Right cardiac atrium (tissue), 5 donors: ENCODE measurements at regions of chr5 and their contacts with region 1.

Region 1: DNA sequence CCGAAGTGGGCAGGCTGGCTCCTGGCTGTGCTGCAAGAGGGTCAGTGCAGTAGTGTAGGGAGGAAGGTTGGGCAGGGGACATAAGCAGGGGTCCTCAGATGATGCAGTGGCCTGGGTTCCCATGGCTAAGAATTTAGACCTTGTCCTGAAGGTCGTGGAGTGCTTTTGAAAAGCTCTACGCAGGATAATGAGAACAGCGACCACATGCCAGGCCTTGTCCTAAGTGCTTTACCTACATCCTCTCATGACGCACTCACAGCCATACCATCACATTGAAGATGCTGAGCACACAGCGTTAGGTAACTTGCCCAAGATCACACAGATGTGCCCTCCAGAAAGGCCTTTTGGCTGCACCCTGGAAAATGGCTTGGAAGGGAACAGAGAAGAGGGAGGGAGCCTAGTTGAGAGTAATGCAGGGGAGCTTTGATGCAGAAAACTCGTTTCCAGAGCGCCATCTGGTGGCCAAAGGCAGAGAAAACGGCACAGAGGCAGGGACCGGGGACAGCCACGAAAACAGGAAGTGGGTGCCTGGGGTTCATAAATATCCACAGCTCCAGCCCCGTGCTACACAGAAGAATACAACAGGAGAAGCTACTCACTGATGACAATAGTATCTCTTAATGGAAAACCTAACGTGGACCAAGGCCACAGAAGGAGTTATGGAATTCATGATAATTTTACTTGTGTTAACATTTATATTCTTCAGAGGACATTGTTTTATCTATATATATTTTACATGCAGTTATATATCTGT is 2.6 kb upstream of the PCDH12 start:
- DNase-seq: peak; percentile 88 to 94 (median 94)
- ATAC-seq: peak; percentile 74 to 86
- H3K4me3 ChIP-seq: no peak overlapping the region
- H3K27ac ChIP-seq: peak overlapping the region; percentile 24
- H3K4me1 ChIP-seq: peaks cover 5% of the 10 kb centered on the region
- H3K27me3 ChIP-seq: no peaks in the 10 kb centered on the region

Region 2: GRCh38 chr5:141691867-141692532 is 268.6 kb before region 1 on chr5:
- intact Hi-C with region 1: loop called (anchors 2 to 5 kb)
- DNase-seq: peak; percentile 83 to 94 (median 94)
- ATAC-seq: peak; percentile 86 to 91
- H3K4me3 ChIP-seq: peak overlapping the region; percentile 37
- H3K27ac ChIP-seq: no peak overlapping the region
- H3K4me1 ChIP-seq: no peaks in the 10 kb centered on the region
- H3K27me3 ChIP-seq: no peaks in the 10 kb centered on the region

Region 3: DNA sequence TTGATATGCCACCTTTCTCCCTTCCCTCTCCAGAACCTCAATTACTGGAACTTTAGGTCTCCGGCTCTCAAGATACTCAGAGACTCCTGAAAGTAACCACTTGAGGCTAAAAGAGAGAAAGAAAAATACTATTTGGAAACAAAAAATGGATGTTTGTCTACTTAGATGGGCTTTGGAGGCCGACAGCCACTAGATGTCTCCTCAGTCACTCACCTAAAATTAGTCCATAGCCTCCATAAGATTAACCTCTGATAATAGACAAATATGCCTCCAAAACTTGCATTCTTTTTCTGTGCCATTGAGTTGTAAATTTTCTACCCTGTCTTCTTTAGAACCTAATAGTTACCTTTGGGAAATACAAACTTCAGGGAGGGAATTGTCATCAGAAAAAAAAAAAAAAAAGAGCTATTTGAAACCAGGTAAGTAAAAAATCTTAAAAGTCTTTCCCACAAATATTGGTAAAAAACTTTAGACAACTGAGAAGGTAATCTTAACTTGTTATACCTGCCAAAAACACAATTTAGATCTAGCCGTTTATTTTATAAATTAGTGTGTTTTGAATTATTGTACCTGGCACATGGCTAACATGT is 71.2 kb before region 1 on chr5:
- intact Hi-C with region 1: loop called in 2 of 4 experiments (anchors 5 to 10 kb)
- DNase-seq: no peak
- ATAC-seq: no peak
- H3K4me3 ChIP-seq: no peak overlapping the region
- H3K27ac ChIP-seq: no peak overlapping the region
- H3K4me1 ChIP-seq: no peaks in the 10 kb centered on the region
- H3K27me3 ChIP-seq: no peaks in the 10 kb centered on the region

Region 4: DNA sequence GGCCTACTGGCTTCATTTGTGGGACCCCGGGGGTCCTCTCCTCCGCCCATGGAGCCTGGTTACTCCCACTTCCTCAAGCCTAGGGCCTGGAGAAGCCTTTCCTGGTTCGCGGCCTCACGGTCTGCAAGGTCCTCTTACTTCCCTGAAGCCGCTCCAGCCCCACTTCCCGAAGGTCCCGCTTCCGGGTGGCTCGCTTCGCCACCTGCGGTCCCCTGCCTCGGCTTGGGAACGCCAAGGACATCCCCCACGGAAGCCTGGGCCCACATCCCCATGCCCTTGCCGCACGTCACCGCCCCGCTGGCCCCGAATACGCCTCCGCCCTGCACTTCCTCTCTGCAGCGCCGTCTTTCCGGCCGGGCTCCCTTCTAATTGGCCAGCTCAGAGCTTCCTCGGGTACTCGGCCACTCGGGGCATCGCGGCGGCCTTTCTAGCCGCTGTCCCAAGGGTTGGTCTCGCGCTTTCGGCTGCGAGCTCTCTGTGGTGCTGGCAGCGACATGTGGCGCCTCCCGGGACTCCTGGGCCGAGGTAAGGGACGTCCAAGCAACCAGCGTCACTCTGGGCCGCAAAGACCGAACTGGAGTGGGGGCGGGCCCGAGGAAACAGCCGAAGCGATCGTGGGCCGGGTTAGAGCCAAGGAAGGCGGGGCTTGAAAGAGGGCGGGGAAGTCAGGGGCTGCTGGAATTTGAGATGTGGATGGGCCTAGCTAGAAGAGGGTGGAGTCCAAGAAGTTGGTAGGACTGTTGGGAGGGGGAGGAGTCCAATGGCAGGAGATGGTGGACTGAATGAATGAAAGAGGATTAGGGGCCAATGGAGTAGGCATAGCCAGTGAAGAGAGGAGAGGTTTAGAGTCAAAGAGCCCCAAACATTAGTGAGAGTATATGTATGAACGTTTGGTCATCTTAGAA is 36.9 kb before region 1 on chr5 and contains the start of gene DELE1:
- intact Hi-C with region 1: loop called in 1 of 4 experiments (anchors 5 kb)
- DNase-seq: peak; percentile 96 to 98 (median 98)
- ATAC-seq: peak; percentile 98
- H3K4me3 ChIP-seq: peak within 1 kb of the TSS; percentile 50
- H3K27ac ChIP-seq: peak within 1 kb of the TSS; percentile 89
- H3K4me1 ChIP-seq: peaks cover 2% of the 10 kb centered on the region
- H3K27me3 ChIP-seq: no peaks in the 10 kb centered on the region
- total RNA-seq, gene DELE1: 82.6 to 109 (median 99.2) TPM